Activated CD8-positive, alpha-beta T cell treated with anti-CD3 and anti-CD28 coated beads, Interleukin-2, amount 10 ng/mL, durations not matched to agents 7 days and 5 days (primary cell): ENCODE measurements at regions of chr5 and their contacts with region 1.

Region 1: DNA sequence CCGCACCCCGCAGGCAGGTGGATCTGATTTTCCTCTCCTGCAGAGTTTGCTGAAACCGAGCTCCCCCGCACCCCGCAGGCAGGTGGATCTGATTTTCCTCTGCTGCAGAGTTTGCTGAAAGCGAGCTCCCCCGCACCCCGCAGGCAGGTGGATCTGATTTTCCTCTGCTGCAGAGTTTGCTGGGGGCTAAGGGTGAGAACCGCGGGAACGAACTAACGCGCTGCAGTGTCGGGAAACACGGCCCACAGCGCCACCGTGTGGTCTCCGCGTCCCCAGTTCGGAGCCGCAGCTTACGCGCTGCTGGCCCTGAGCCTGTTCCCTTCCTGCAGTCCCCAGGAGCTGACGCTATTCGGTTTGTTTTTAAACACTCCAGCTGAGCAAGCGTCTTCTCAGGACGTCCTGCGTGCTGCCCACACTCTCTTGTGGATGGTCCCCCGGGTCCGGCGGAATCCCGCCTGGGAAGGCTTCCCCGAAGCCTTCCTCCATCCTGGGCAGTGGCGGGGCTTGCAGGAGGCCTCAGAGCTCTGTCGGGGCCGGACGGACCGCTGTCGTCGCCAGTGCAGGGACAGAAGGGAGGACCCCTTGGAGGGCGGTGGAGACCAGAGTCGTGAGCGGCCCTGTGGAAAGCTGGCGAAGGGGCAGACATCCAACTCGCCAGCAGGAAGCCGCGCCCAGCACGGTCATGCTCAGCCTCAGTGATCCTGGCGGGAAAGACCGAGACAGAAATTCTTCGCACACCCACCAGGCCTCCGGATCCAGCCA is 121.2 kb upstream of the LPCAT1 start:
- DNase-seq: peak; percentile 83
- ATAC-seq: peak; percentile 91
- H3K4me3 Mint-ChIP-seq: peak overlapping the region; percentile 22
- H3K27ac Mint-ChIP-seq: no peak overlapping the region
- H3K4me1 Mint-ChIP-seq: peaks cover 10% of the 10 kb centered on the region
- H3K27me3 Mint-ChIP-seq: peaks cover 42% of the 10 kb centered on the region

Region 2: DNA sequence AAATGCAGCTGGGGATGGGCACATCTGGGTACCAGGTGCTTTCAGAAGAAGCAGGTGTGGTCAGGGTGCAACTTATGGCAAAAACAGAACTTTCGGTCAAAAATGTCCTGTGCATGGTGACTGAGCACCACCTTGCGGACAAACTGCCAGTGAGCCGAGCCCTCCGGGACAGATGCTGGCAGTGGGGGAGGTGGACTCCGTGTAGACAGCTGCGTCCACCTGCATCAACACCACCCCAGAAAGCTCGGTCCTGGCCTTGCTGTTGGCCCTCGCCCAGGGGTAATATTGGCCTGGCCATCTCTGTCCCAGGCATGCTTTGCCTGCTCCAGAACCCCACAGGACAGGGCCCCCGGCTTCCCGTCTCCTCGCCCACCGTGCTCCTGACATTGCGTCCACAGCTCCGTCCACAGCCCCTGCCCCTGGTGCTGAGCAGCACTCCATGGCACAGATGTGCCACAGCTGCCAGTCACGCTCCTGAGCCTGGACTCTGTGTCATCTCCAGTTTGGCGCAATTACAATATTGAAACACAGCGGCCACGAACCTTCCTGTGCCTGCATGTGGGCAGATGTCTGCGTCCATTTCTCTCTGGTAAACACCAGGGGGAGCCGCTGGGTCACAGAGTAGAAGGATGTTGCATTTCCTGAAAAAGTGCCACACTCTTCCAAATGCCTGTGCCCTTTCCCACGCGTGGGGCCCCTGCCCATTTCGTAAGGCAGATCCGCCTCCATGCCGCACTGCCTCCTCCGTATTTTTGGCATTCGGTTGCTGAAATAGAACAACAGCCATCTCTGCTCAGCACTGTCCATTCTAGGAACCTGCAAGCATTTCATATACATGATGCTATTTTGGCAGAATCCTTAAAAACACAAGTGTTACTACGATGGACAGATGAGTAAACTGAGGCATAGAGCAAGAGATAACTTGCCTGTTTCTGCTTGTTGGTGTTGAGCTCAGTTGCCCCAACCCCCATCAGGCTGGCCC is 477.0 kb before region 1 on chr5:
- CTCF ChIA-PET with region 1: interaction called, 15 read pairs
- POLR2A ChIA-PET with region 1: no interaction called
- DNase-seq: peak; percentile 81
- ATAC-seq: peak; percentile 76
- H3K4me3 Mint-ChIP-seq: peak overlapping the region; percentile 47
- H3K27ac Mint-ChIP-seq: no peak overlapping the region
- H3K4me1 Mint-ChIP-seq: peaks cover 14% of the 10 kb centered on the region
- H3K27me3 Mint-ChIP-seq: peaks cover 11% of the 10 kb centered on the region

Region 3: GRCh38 chr5:1174122-1174936 is 470.7 kb before region 1 on chr5:
- CTCF ChIA-PET with region 1: interaction called, 15 read pairs
- POLR2A ChIA-PET with region 1: no interaction called
- DNase-seq: peak; percentile 56
- ATAC-seq: peak; percentile 50
- H3K4me3 Mint-ChIP-seq: no peak overlapping the region
- H3K27ac Mint-ChIP-seq: no peak overlapping the region
- H3K4me1 Mint-ChIP-seq: peaks cover 7% of the 10 kb centered on the region
- H3K27me3 Mint-ChIP-seq: peaks cover 4% of the 10 kb centered on the region

Region 4: DNA sequence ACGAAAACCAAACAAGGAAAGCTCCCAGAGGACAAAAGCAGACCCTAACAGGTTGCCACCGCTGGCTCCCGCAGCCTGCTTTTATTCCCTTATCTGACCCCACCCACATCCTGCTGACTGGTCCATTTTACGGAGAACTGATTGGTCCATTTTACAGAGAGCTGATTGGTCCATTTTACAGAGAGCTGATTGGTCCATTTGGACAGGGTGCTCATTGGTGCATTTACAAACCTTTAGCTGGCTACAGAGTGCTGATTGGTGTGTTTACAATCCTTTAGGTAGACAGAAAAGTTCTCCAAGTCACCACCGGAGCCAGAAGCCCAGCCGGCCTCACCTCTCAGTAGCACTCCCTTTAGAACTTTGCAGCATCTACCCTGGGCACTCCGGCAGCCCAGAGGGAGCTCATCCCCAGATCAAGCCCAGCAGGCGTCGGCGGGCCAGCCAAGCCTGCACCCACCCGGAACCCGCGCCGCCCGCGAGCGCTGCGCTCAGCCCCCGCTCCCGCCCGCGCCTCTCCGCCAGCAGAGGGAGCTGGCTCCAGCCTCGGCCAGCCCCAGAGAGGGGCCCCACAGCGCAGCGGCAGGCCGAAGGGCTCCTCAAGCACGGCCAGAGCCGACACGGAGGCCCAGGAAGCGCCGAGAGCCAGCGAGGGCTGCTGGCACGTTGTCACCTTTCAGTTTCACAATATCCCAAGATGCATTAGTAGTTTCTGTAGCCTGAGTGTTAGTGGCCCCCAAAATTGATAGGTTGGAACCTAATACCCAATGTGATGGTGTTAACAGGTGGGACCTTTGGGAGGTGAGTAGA is 264.8 kb before region 1 on chr5:
- CTCF ChIA-PET with region 1: interaction called, 13 read pairs
- POLR2A ChIA-PET with region 1: no interaction called
- DNase-seq: peak; percentile 60
- ATAC-seq: peak; percentile 97
- H3K4me3 Mint-ChIP-seq: peak overlapping the region; percentile 54
- H3K27ac Mint-ChIP-seq: no peak overlapping the region
- H3K4me1 Mint-ChIP-seq: peaks cover 4% of the 10 kb centered on the region
- H3K27me3 Mint-ChIP-seq: no peaks in the 10 kb centered on the region

Region 5: DNA sequence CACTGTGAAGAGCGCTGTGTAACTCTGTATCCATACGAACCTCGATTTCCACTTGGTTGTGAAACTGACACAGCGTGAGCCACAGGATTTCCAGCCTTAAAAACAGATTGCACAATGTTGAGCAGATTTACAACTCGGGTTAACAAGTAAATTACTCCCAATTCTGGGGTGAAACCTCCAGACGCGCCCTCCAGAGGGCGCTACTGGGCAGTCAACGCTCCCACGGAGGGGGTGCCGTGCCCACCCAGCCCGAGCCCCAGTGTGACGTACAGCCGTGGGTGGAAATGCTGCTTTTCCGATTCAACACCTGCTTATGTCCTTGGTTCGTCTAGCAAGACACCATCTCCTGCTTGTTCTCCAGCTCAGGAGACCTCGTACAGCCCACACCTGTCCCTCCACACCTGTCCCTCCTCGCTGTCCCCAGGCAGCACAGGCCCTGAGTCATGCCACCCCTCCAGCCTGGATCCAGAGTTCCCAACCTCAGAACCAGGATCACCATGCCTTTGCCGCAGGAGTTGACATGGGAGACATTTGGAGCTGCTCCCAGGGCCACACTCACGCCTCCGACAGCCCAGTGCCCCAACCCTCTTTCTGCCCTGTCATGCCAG is 165.3 kb before region 1 on chr5:
- CTCF ChIA-PET with region 1: interaction called, 16 read pairs
- POLR2A ChIA-PET with region 1: no interaction called
- DNase-seq: peak; percentile 43
- ATAC-seq: no peak
- H3K4me3 Mint-ChIP-seq: no peak overlapping the region
- H3K27ac Mint-ChIP-seq: no peak overlapping the region
- H3K4me1 Mint-ChIP-seq: no peaks in the 10 kb centered on the region
- H3K27me3 Mint-ChIP-seq: no peaks in the 10 kb centered on the region

Region 6: GRCh38 chr5:1633605-1634336 is 11.2 kb before region 1 on chr5:
- CTCF ChIA-PET with region 1: no interaction called
- POLR2A ChIA-PET with region 1: no interaction called
- DNase-seq: peak; percentile 84
- ATAC-seq: peak; percentile 92
- H3K4me3 Mint-ChIP-seq: peak overlapping the region; percentile 90
- H3K27ac Mint-ChIP-seq: peak overlapping the region; percentile 93
- H3K4me1 Mint-ChIP-seq: peaks cover 29% of the 10 kb centered on the region
- H3K27me3 Mint-ChIP-seq: peaks cover 8% of the 10 kb centered on the region